Activated naive CD4-positive, alpha-beta T cell treated with anti-CD3 and anti-CD28 coated beads, Interleukin-2, amount 10 ng/mL, durations not matched to agents 7 days and 5 days (primary cell): ENCODE measurements at regions of chr19 and their contacts with region 1.

Region 1: DNA sequence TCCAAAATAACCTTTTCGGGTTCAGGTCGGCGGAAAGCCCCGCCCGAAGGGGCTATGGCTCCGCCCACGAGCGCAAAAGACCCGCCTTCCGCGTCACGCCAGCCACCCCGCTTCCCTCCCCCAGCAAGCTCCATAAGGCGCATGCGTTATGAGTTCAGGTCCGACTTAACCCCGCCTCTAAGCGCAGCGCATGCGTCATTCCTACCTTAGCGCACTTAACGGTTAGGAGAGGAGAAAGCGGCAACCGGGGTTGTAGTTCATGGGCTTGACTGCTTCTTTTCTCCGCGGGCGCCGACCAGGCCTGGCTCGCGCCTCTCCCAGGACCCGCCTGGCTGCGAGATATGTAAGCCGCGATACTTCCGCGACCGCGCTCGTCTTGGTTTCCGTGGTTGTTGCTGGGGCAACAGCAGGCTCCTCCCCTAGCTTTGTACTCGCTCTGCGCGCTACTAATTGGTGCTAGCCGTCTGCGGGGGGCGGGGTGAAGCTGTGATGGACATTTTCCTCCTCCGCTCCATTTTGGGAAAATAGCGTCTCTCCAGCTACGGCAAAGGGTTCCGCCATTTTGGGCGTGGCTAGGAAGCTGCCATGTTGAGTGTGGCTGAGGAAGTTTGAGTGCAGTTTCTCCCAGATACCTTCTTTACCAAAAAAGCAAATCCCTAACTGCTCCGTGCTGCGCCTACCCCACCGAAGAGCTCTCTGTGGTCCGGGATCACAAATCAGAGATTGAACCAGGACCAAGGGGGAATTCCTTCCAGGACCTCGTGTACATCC is at the start of gene B9D2:
- DNase-seq: peak; percentile 99
- H3K4me3 Mint-ChIP-seq: peak within 1 kb of the TSS; percentile 81
- H3K27ac Mint-ChIP-seq: peak within 1 kb of the TSS; percentile 98
- H3K4me1 Mint-ChIP-seq: peaks cover 40% of the 10 kb centered on the region
- H3K27me3 Mint-ChIP-seq: no peaks in the 10 kb centered on the region

Region 2: GRCh38 chr19:41353466-41354342 is 10.2 kb before region 1 on chr19 and contains the start of gene TGFB1:
- CTCF ChIA-PET with region 1: interaction called, 16 read pairs
- DNase-seq: peak; percentile 95
- H3K4me3 Mint-ChIP-seq: peak within 1 kb of the TSS; percentile 92
- H3K27ac Mint-ChIP-seq: peak within 1 kb of the TSS; percentile 93
- H3K4me1 Mint-ChIP-seq: peaks cover 63% of the 10 kb centered on the region
- H3K27me3 Mint-ChIP-seq: no peaks in the 10 kb centered on the region

Region 3: DNA sequence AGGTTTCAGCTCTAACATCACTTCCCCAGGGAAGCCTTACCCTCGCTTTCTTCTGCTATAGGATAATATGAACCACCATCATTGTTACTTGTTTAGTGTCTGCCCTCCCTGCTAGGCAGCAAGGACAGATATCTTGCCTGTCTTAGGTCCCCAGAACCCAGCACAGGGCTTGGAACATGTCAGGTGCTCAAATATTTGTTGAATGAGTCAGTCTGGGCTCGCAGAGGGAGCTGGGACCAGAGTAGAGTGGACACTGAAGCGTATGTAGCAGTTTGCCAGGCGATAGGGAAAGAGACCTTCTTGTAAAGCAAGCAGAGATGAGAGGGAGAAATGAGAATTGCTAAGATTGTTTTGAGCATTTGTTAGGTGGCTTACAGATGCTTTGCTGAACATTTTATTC is 45.4 kb after region 1 on chr19:
- CTCF ChIA-PET with region 1: no interaction called
- DNase-seq: no peak
- H3K4me3 Mint-ChIP-seq: no peak overlapping the region
- H3K27ac Mint-ChIP-seq: no peak overlapping the region
- H3K4me1 Mint-ChIP-seq: peaks cover 16% of the 10 kb centered on the region
- H3K27me3 Mint-ChIP-seq: no peaks in the 10 kb centered on the region

Region 4: DNA sequence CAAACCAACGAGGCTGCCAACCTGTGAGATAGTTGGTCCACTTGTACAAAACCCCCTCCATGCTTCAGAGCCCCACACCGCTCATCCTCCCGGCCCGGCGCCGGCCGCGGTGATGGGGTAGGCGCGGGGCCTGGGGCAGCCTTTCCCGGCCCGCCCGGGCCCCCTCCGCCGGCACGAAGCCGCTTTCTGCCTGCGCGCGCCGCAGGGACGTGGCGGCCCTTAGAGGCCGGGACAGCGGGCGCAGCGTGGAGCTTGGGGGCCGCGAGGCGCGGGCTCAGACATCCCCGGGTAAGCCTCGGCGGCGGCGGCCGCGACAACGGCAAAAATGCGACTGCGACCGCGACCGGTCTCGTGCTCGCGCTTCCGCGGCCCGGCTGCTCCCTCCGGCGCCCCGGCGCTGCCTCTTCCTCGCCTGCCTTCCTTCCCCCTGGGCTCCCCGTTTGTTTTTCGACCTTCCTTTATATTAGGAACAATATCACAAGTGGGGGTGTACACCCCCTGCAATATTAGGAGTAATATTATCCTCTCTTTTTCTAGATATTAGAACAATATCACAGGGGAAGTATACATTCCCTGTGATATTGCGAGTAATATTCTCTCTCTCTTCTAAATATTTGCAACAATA is 158.1 kb after region 1 on chr19:
- CTCF ChIA-PET with region 1: no interaction called
- DNase-seq: peak; percentile 60
- H3K4me3 Mint-ChIP-seq: peak overlapping the region; percentile 79
- H3K27ac Mint-ChIP-seq: peak overlapping the region; percentile 88
- H3K4me1 Mint-ChIP-seq: peaks cover 27% of the 10 kb centered on the region
- H3K27me3 Mint-ChIP-seq: peaks cover 26% of the 10 kb centered on the region